ENCODE measurements at regions of chr20 and their contacts with region 1.

Region 1: DNA sequence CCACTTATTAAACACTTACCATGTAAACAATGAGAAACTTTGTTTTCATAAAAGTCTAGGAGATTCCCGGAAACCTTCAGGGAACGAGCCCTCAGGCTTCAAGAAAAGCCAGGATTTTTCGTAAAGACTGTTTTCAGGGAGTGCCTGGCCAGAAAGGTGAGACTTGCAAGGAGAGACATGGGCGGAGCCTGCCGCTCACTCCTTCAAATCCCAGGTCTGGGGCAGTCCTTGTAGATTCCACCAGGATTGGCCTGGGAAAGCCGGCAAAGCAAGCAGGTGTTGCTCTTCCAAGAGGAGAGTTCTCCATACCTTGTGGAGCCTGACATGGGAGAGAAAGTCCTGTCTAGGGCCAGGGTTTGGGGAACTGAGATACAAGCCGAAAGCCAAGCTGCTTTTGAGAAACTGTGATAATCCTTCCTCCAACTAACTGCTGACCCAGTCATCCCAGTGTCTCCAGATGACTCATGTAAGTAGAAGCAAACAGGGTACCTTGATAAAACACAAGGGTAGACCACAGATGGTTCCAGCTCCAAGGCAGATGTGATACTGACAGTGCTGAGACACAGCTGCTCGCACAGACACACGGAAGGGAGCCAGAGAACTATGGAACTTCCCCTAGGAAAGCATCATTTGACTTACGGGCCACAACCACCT is 69.4 kb upstream of the NAA20 start:
- DNase-seq: no peak

Region 2: GRCh38 chr20:19909725-19910124 is 38.0 kb before region 1 on chr20:
- intact Hi-C with region 1: loop called (anchors 5 kb)
- DNase-seq: peak; percentile 87

Region 3: DNA sequence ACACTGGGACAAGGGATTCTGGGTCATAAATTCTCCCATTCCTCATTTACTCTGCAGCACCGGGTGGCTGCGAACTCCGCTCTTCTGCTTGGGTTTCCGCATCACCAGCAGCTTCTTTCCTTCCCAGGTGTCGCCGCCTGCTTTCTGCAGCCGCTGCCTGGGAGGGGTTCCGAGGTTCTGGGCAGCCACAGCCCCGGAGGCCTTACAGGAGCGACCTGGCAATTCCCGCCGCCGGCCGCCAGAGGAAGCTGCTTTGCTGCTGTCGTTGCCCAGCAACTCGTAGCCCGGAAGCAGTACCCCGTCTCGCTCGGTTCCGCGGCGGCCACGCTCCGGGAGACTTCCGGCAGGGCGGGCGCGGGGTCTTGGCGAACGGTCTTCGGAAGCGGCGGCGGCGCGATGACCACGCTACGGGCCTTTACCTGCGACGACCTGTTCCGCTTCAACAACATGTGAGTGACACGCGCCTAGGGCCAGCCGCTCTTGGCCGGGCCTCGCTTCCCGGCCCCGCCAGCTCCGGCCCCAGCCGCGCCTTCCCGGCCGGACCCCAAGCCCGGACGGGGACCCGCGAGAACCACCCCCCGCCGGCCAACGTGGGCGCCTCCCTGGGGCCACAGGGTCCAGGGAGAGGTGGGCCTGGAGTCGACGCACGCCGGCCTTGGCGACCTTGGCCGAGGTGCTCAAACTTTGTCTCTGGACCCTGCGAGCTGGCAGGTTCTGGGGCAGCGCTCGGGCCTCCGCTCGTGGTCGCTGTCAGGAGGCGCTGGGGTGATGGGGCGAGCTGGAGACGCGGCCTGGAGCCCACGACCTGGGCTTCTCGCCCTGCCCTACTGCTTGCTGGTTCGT is 69.5 kb after region 1 on chr20 and contains the start of gene NAA20:
- intact Hi-C with region 1: loop called (anchors 5 kb)
- DNase-seq: peak; percentile 97
- total RNA-seq, gene NAA20: 63.4 TPM

Measured in cardiac septum (tissue), 1 donor.